Natural killer cell (primary cell): ENCODE measurements at regions of chr5 and their contacts with region 1.

Region 1: GRCh38 chr5:134041570-134042411 is 37.0 kb upstream of the VDAC1 start:
- DNase-seq: peak in 1 of 2 donors; percentile 33
- ATAC-seq: no peak
- H3K4me3 ChIP-seq: no peak overlapping the region
- H3K4me3 Mint-ChIP-seq: no peak overlapping the region
- H3K27ac ChIP-seq: peak overlapping the region; percentile 46
- H3K27ac Mint-ChIP-seq: no peak overlapping the region
- H3K4me1 ChIP-seq: peaks cover 30% of the 10 kb centered on the region
- H3K4me1 Mint-ChIP-seq: peaks cover 0 to 6% of the 10 kb centered on the region in 2 donors
- H3K27me3 ChIP-seq: no peaks in the 10 kb centered on the region
- H3K27me3 Mint-ChIP-seq: no peaks in the 10 kb centered on the region
- CTCF ChIP-seq: no peak

Region 2: GRCh38 chr5:133952729-133953567 is 88.8 kb before region 1 on chr5:
- intact Hi-C with region 1: no loop called
- DNase-seq: no peak
- ATAC-seq: no peak
- H3K4me3 ChIP-seq: no peak overlapping the region
- H3K4me3 Mint-ChIP-seq: no peak overlapping the region
- H3K27ac ChIP-seq: no peak overlapping the region
- H3K27ac Mint-ChIP-seq: no peak overlapping the region
- H3K4me1 ChIP-seq: no peaks in the 10 kb centered on the region
- H3K4me1 Mint-ChIP-seq: no peaks in the 10 kb centered on the region
- H3K27me3 ChIP-seq: no peaks in the 10 kb centered on the region
- H3K27me3 Mint-ChIP-seq: no peaks in the 10 kb centered on the region
- CTCF ChIP-seq: no peak

Region 3: GRCh38 chr5:134070725-134071613 is 29.2 kb after region 1 on chr5:
- intact Hi-C with region 1: no loop called
- DNase-seq: peak; percentile 27 to 59
- ATAC-seq: peak; percentile 33 to 75 (median 68)
- H3K4me3 ChIP-seq: peak overlapping the region; percentile 4
- H3K4me3 Mint-ChIP-seq: peak overlapping the region; percentile 25
- H3K27ac ChIP-seq: peak overlapping the region; percentile 24
- H3K27ac Mint-ChIP-seq: peak overlapping the region in 1 of 2 donors; percentile 44
- H3K4me1 ChIP-seq: peaks cover 17% of the 10 kb centered on the region
- H3K4me1 Mint-ChIP-seq: peaks cover 0 to 6% of the 10 kb centered on the region in 2 donors
- H3K27me3 ChIP-seq: peaks cover 5% of the 10 kb centered on the region
- H3K27me3 Mint-ChIP-seq: peaks cover 0 to 23% of the 10 kb centered on the region in 2 donors
- CTCF ChIP-seq: no peak

Region 4: DNA sequence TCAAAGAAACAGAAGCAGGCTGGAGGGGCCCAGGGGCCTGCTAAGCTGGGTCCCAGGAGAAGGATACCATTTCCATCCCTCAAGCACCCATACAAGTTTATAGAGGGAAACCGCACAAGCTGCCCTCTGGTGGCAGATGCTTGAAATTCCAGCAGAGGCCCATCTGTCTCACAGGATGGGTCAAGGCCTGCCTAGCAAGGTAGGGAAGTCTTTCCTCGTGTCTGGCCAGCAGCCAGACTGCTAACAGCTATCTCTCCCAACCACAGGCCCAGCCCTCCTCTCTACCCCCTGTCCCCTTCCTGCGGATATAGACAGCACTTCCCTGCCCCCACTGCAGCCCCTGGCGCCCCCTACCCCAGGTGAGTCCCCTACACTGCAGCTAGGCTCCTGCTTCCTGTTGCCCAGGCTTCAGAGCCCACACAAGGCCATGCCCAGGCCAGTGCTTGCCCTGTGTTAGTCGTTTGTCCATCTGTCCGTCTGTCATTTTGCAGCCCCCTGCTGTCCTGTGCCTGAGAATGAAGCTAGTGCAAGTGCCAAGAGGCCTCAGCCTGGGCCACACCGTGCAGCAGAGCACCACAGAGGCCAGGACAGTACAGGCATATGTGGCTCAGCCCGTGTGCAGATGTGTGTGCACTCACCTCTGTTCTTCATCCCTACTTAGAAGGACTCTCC is 98.9 kb after region 1 on chr5:
- intact Hi-C with region 1: loop called (anchors 1 kb)
- DNase-seq: peak; percentile 55 to 81
- ATAC-seq: peak; percentile 61 to 78 (median 68)
- H3K4me3 ChIP-seq: no peak overlapping the region
- H3K4me3 Mint-ChIP-seq: no peak overlapping the region
- H3K27ac ChIP-seq: peak overlapping the region; percentile 68
- H3K27ac Mint-ChIP-seq: peak overlapping the region; percentile 98
- H3K4me1 ChIP-seq: peaks cover 64% of the 10 kb centered on the region
- H3K4me1 Mint-ChIP-seq: peaks cover 25 to 70% of the 10 kb centered on the region in 2 donors
- H3K27me3 ChIP-seq: no peaks in the 10 kb centered on the region
- H3K27me3 Mint-ChIP-seq: no peaks in the 10 kb centered on the region
- CTCF ChIP-seq: peak; percentile 75

Region 5: GRCh38 chr5:134145779-134146581 is 104.2 kb after region 1 on chr5:
- intact Hi-C with region 1: loop called (anchors 1 kb)
- DNase-seq: peak; percentile 81 to 90
- ATAC-seq: peak; percentile 76 to 88 (median 80)
- H3K4me3 ChIP-seq: no peak overlapping the region
- H3K4me3 Mint-ChIP-seq: peak overlapping the region; percentile 4
- H3K27ac ChIP-seq: peak overlapping the region; percentile 22
- H3K27ac Mint-ChIP-seq: peak overlapping the region; percentile 79 to 89
- H3K4me1 ChIP-seq: peaks cover 18% of the 10 kb centered on the region
- H3K4me1 Mint-ChIP-seq: peaks cover 25 to 40% of the 10 kb centered on the region in 2 donors
- H3K27me3 ChIP-seq: no peaks in the 10 kb centered on the region
- H3K27me3 Mint-ChIP-seq: no peaks in the 10 kb centered on the region
- CTCF ChIP-seq: peak; percentile 88

Region 6: GRCh38 chr5:134289509-134290113 is 247.8 kb after region 1 on chr5:
- intact Hi-C with region 1: loop called (anchors 10 kb)
- DNase-seq: peak in 1 of 2 donors; percentile 81
- ATAC-seq: peak; percentile 75 to 86 (median 85)
- H3K4me3 ChIP-seq: no peak overlapping the region
- H3K4me3 Mint-ChIP-seq: no peak overlapping the region
- H3K27ac ChIP-seq: no peak overlapping the region
- H3K27ac Mint-ChIP-seq: no peak overlapping the region
- H3K4me1 ChIP-seq: no peaks in the 10 kb centered on the region
- H3K4me1 Mint-ChIP-seq: no peaks in the 10 kb centered on the region
- H3K27me3 ChIP-seq: no peaks in the 10 kb centered on the region
- H3K27me3 Mint-ChIP-seq: peaks cover 12 to 22% of the 10 kb centered on the region in 2 donors
- CTCF ChIP-seq: peak; percentile 63